ENCODE measurements at regions of chr7 and their contacts with region 1.

Region 1: GRCh38 chr7:37181550-37181932 is 267.1 kb downstream of the ELMO1 start:
- DNase-seq: no peak
- H3K4me3 ChIP-seq: no peak overlapping the region
- H3K27ac ChIP-seq: no peak overlapping the region
- H3K4me1 ChIP-seq: no peaks in the 10 kb centered on the region; a peak in 2 of 7 replicates
- H3K27me3 ChIP-seq: no peaks in the 10 kb centered on the region
- CTCF ChIP-seq: no peak
- EP300 ChIP-seq: no peak
- POLR2A ChIP-seq: no peak
- RAD21 ChIP-seq: no peak

Region 2: DNA sequence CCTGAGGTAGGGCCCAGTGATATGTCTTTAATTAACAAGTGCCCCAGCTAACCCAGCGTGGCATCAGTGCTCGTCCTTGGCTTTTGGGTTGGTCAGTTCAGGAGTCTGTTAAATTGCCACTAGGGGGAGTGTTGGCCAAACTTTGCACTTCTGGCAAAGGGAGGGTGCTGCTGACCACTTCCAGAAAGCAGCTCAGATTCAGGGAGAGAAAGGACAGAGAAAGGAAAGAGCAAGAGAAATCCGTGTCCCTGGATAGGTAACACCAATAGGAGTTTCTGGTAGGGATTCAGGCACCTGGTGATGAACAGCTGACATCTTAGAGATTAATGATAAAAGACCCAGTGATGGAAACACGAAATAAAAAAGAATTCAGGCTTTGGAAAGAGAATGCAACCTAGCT is 214.2 kb before region 1 on chr7:
- CTCF ChIA-PET with region 1: interaction called, 26 read pairs
- POLR2A ChIA-PET with region 1: no interaction called
- DNase-seq: peak in 1 of 2 experiments; percentile 47
- H3K4me3 ChIP-seq: no peak overlapping the region
- H3K27ac ChIP-seq: no peak overlapping the region
- H3K4me1 ChIP-seq: peaks cover 0 to 6% (median 2%) of the 10 kb centered on the region in 4 experiments; a peak in 4 of 7 replicates
- H3K27me3 ChIP-seq: no peaks in the 10 kb centered on the region
- CTCF ChIP-seq: peak; percentile 69 to 89 (median 85)
- EP300 ChIP-seq: no peak
- POLR2A ChIP-seq: no peak
- RAD21 ChIP-seq: peak; percentile 83 to 89

Region 3: GRCh38 chr7:36986429-36987362 is 194.8 kb before region 1 on chr7:
- CTCF ChIA-PET with region 1: interaction called, 48 read pairs
- POLR2A ChIA-PET with region 1: no interaction called
- DNase-seq: peak; percentile 41 to 90
- H3K4me3 ChIP-seq: peak overlapping the region in 1 of 4 experiments; percentile 21; a peak in 1 of 8 replicates
- H3K27ac ChIP-seq: peak overlapping the region; percentile 72
- H3K4me1 ChIP-seq: peaks cover 0 to 14% (median 0%) of the 10 kb centered on the region in 4 experiments; a peak in 3 of 7 replicates
- H3K27me3 ChIP-seq: no peaks in the 10 kb centered on the region
- CTCF ChIP-seq: peak; percentile 75 to 91 (median 88)
- EP300 ChIP-seq: peak in 1 of 2 experiments; percentile 53; a peak in 1 of 3 replicates
- POLR2A ChIP-seq: no peak
- RAD21 ChIP-seq: peak; percentile 71 to 81

Region 4: DNA sequence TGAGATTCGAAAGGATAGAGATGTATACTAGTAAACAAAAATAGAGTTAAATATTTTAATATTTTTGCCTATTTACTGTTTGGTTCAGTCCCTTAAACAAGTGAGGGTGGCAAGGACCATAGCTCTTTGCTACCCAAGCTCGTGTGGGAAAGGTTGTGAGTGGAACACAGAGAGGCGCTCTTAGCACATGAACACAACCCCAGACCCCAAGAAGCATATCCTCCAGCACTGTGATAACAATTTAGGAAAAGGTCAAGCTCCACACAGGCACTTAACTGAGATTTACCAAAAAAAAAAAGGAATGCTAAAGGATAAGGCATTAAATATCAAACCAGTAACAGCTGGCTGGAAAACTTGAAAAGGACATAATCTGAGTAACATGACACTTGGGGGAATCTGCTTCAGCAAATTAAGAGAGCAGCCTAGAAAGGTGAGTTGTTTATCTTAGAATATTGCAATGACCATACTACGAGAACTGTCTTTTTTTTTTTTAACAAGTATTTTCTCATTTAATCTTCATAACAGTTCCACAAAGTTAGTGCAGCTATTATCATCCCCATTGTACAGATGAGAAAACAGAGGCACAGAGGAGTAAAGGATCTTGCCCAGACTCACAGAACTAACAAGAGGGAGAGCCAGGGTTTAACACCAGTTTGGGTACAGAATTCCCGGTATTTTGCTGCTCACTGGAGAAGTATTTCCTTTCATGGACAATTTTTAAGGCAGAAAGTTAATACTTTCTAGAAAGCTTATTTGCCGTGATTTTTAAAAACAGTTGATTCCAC is 153.8 kb before region 1 on chr7:
- CTCF ChIA-PET with region 1: interaction called, 10 read pairs
- POLR2A ChIA-PET with region 1: no interaction called
- DNase-seq: no peak
- H3K4me3 ChIP-seq: no peak overlapping the region
- H3K27ac ChIP-seq: no peak overlapping the region
- H3K4me1 ChIP-seq: peaks cover 0 to 17% (median 4%) of the 10 kb centered on the region in 4 experiments; a peak in 3 of 7 replicates
- H3K27me3 ChIP-seq: no peaks in the 10 kb centered on the region
- CTCF ChIP-seq: peak in 2 of 3 experiments; percentile 13 to 42; a peak in 3 of 4 replicates
- EP300 ChIP-seq: no peak
- POLR2A ChIP-seq: no peak
- RAD21 ChIP-seq: peak; percentile 57 to 67

Region 5: GRCh38 chr7:37095122-37095521 is 86.4 kb before region 1 on chr7:
- CTCF ChIA-PET with region 1: interaction called, 42 read pairs
- POLR2A ChIA-PET with region 1: no interaction called
- DNase-seq: no peak
- H3K4me3 ChIP-seq: no peak overlapping the region
- H3K27ac ChIP-seq: no peak overlapping the region; the same call in 1 of the 2 replicates
- H3K4me1 ChIP-seq: peaks cover 0 to 4% (median 2%) of the 10 kb centered on the region in 4 experiments; a peak in 3 of 7 replicates
- H3K27me3 ChIP-seq: no peaks in the 10 kb centered on the region
- CTCF ChIP-seq: no peak
- EP300 ChIP-seq: no peak
- POLR2A ChIP-seq: no peak
- RAD21 ChIP-seq: no peak

Region 6: GRCh38 chr7:37201003-37201875 is 19.7 kb after region 1 on chr7:
- CTCF ChIA-PET with region 1: interaction called, 26 read pairs
- POLR2A ChIA-PET with region 1: no interaction called
- DNase-seq: peak in 1 of 2 experiments; percentile 88
- H3K4me3 ChIP-seq: no peak overlapping the region
- H3K27ac ChIP-seq: no peak overlapping the region
- H3K4me1 ChIP-seq: no peaks in the 10 kb centered on the region; a peak in 1 of 7 replicates
- H3K27me3 ChIP-seq: no peaks in the 10 kb centered on the region
- CTCF ChIP-seq: peak; percentile 81 to 92 (median 86)
- EP300 ChIP-seq: no peak
- POLR2A ChIP-seq: no peak
- RAD21 ChIP-seq: peak; percentile 86 to 92

Measured in H1 (cell line).